Caco-2 (cell line): ENCODE measurements at regions of chr14 and their contacts with region 1.

Region 1: DNA sequence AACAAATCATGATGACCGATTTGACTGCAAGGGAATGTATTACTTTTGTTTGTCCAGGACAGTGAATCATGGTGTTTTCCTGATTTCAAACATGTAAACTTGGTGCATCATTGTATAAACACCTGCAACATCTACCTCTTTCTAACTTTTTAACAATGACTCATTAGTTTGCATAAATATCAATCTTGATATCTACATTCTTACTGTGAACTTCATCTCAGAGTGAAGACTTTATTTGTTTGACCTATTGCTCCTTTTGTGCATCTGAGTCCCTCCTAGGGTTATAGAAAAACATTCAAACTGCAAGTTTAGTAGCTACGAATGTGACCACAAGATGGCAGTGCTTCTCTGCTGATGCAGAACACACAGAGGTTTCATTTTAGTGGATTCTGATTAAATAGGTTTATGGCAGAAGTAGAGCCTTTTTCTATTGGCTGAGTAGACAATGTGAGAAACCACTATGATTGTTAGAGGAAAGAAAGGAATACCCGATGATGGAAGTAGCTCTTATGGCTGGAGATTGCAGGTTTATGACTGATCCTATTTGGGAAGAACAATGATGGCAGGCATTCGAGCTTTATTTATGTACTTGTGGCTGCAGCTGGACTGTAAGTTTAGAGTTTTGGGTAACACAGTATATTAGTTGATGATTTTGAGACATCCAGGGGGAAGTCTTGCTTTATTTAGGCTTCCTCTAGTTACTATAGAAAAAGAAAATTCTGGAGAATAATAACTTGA is 244.2 kb upstream of the OR4E1 start:
- DNase-seq: peak in 1 of 2 experiments; percentile 42
- H3K4me3 ChIP-seq: no peak overlapping the region
- H3K4me3 Mint-ChIP-seq: no peak overlapping the region
- H3K27ac Mint-ChIP-seq: no peak overlapping the region
- H3K4me1 ChIP-seq: no peaks in the 10 kb centered on the region
- H3K4me1 Mint-ChIP-seq: no peaks in the 10 kb centered on the region
- H3K27me3 ChIP-seq: no peaks in the 10 kb centered on the region
- H3K27me3 Mint-ChIP-seq: peaks cover 6% of the 10 kb centered on the region
- CTCF ChIP-seq: peak; percentile 50 to 81

Region 2: DNA sequence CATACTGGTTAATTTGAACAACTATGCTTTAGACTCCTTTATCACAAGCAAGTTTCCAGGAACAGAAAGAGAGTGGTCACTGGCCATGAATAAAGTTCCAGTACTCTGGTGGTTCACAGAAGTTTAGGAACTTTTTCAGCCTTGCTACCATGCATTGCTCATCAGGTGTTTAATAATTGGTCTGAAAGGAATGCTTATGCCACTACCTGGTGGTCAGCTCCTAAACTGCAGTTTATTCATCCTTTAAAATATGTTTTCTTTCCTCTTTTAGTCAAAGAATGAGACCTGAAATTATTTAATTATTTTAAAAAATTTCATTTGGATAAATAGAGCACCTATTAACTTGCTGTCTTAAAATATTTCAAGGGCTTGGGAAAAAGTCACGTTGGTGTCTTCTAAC is 15.8 kb after region 1 on chr14:
- CTCF ChIA-PET with region 1: interaction called, 9 read pairs
- POLR2A ChIA-PET with region 1: no interaction called
- intact Hi-C with region 1: loop called (anchors 1 kb)
- DNase-seq: peak in 1 of 2 experiments; percentile 5
- H3K4me3 ChIP-seq: no peak overlapping the region
- H3K4me3 Mint-ChIP-seq: no peak overlapping the region
- H3K27ac Mint-ChIP-seq: no peak overlapping the region
- H3K4me1 ChIP-seq: no peaks in the 10 kb centered on the region
- H3K4me1 Mint-ChIP-seq: no peaks in the 10 kb centered on the region
- H3K27me3 ChIP-seq: no peaks in the 10 kb centered on the region
- H3K27me3 Mint-ChIP-seq: no peaks in the 10 kb centered on the region
- CTCF ChIP-seq: peak in 1 of 2 experiments; percentile 47

Region 3: GRCh38 chr14:21940887-21941856 is 23.3 kb after region 1 on chr14:
- CTCF ChIA-PET with region 1: no interaction called
- POLR2A ChIA-PET with region 1: no interaction called
- intact Hi-C with region 1: loop called (anchors 2 kb)
- DNase-seq: peak in 1 of 2 experiments; percentile 32
- H3K4me3 ChIP-seq: no peak overlapping the region
- H3K4me3 Mint-ChIP-seq: no peak overlapping the region
- H3K27ac Mint-ChIP-seq: no peak overlapping the region
- H3K4me1 ChIP-seq: 0 out of 2 replicates have a peak, but pooled peaks cover 5% of the 10 kb centered on the region
- H3K4me1 Mint-ChIP-seq: no peaks in the 10 kb centered on the region
- H3K27me3 ChIP-seq: no peaks in the 10 kb centered on the region
- H3K27me3 Mint-ChIP-seq: peaks cover 11% of the 10 kb centered on the region
- CTCF ChIP-seq: peak; percentile 39 to 74